A549 (cell line): ENCODE measurements at regions of chr5 and their contacts with region 1.

Region 1: GRCh38 chr5:141618804-141619554 is at the start of gene DIAPH1:
- DNase-seq: peak; percentile 85 to 97
- ATAC-seq: peak; percentile 95
- H3K4me3 ChIP-seq: peak within 1 kb of the TSS; percentile 99
- H3K27ac ChIP-seq: peak within 1 kb of the TSS; percentile 95 to 98
- H3K4me1 ChIP-seq: peaks cover 18% of the 10 kb centered on the region
- CTCF ChIP-seq: peak; percentile 97
- EP300 ChIP-seq: no peak; a peak in 1 of 5 replicates
- POLR2A ChIP-seq: peak; percentile 74
- RAD21 ChIP-seq: peak; percentile 76 to 92
- polyA plus RNA-seq, gene DIAPH1: 53.4 and 82.2 TPM in 2 replicates

Region 2: DNA sequence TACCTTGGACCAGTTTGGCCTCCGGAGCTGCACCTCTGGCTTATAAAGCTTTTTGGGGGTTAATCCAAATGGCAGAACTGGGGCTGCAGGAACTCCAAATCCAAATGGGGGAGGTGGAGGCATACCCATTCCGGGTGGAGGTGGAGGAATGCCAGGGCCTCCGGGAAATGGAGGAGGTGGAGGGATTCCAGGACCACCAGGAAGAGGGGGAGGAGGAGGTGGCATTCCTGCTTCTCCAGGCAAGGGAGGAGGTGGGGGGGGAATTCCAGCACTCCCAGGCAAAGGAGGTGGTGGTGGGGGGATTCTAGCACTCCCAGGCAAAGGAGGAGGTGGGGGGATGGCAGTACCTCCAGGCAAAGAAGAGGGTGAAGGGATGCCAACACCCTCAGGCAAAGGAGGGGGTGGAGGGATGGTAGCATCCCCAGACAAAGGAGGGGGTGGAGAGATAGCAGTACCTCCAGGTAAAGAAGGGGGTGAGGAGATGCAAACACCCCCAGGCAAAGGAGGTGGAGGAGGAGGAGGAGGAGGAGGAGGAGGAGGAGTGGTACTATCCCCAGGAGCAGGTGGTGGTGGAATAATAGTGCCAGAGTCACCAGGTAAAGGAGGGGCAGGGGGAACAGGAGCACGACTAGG is 45.4 kb before region 1 on chr5:
- CTCF ChIA-PET with region 1: interaction called, 17 read pairs
- POLR2A ChIA-PET with region 1: no interaction called
- DNase-seq: no peak
- ATAC-seq: no peak
- H3K4me3 ChIP-seq: no peak overlapping the region
- H3K27ac ChIP-seq: no peak overlapping the region
- H3K4me1 ChIP-seq: no peaks in the 10 kb centered on the region
- CTCF ChIP-seq: no peak
- EP300 ChIP-seq: no peak
- POLR2A ChIP-seq: no peak
- RAD21 ChIP-seq: no peak

Region 3: GRCh38 chr5:141590127-141590526 is 28.9 kb before region 1 on chr5:
- CTCF ChIA-PET with region 1: interaction called, 303 read pairs
- POLR2A ChIA-PET with region 1: interaction called, 20 read pairs
- DNase-seq: no peak
- ATAC-seq: no peak
- H3K4me3 ChIP-seq: no peak overlapping the region
- H3K27ac ChIP-seq: no peak overlapping the region
- H3K4me1 ChIP-seq: 0 out of 3 replicates have a peak, but pooled peaks cover 6% of the 10 kb centered on the region
- CTCF ChIP-seq: no peak
- EP300 ChIP-seq: no peak
- POLR2A ChIP-seq: no peak
- RAD21 ChIP-seq: no peak

Region 4: DNA sequence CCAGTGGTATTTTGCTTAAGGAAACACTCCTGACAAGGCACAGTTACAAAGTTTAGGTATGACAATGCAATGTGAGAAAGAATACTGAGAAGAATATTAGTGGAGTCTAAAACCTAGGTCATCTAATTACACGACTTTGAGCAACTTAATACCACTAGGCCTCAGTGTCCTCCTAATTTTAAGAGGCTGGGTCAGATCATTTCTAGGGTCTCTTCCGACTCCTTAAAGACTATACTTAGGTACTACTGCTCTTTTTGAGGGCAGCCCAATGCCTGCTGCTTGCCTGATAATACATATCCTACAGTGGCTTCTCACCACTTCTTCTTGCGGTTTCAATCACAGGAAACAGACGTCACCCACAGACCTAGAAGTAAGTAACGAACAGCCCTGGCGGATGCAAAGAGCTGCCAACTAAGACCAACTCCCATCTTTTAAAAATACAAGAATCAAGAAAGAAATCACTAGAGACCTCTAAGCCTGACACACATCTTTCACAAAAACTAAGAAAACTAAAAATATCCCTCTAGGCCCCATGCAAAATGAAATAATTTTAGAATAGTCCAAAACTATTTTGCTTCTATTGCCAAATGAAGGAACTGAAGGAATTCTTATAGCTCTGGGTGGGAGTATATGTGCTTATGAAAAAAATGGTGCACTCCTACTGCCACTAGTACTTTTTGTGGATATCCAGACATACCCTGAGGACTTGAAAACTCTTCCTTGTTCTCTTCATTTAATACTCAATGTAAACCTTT is 13.3 kb before region 1 on chr5:
- CTCF ChIA-PET with region 1: interaction called, 85 read pairs
- POLR2A ChIA-PET with region 1: interaction called, 4 read pairs
- DNase-seq: no peak
- ATAC-seq: no peak
- H3K4me3 ChIP-seq: no peak overlapping the region
- H3K27ac ChIP-seq: peak overlapping the region in 1 of 2 experiments; percentile 18; a peak in 2 of 6 replicates
- H3K4me1 ChIP-seq: peaks cover 50% of the 10 kb centered on the region
- CTCF ChIP-seq: no peak
- EP300 ChIP-seq: no peak
- POLR2A ChIP-seq: no peak
- RAD21 ChIP-seq: no peak

Region 5: DNA sequence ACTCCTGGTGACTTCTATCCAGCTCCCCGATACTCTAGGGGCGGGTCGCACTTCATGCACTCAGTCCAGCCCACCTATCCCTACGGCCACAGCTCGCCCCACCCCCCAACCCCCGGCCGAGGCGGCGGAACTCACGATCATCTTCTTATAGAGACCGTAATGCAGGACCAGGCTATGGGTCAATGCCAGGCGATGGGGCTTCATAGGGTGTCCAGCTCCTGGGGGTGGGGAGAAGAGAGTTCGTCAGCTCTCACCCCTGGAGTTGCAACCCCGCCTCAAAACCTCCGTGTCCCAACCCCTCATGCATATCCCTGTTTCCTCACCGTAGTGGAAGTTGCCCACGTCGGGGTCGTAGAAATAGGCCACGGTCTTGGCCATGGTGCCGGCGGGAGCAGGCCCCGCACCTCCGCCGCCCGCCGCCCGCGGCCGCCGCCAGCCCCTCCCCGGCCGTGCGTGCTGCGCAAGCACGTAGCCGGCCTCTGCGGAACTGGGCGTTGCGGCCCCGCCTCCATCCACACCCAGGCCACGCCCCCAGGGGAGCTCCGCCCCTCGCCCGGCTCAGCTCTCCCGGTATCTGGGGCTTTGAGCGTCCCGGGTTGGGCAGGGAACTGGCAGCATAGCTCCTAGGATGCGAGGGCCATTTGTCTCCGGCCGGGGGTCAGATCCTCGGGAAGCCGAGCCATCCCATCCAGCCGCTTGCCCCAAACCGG is 17.6 kb after region 1 on chr5 and contains the starts of genes HDAC3 and RELL2:
- CTCF ChIA-PET with region 1: interaction called, 170 read pairs
- POLR2A ChIA-PET with region 1: interaction called, 33 read pairs
- DNase-seq: peak; percentile 90 to 93
- ATAC-seq: peak; percentile 80 to 94
- H3K4me3 ChIP-seq: peak within 1 kb of the TSS; percentile 83
- H3K27ac ChIP-seq: peak within 1 kb of the TSS; percentile 85 to 92
- H3K4me1 ChIP-seq: peaks cover 18% of the 10 kb centered on the region
- CTCF ChIP-seq: no peak
- EP300 ChIP-seq: no peak
- POLR2A ChIP-seq: peak; percentile 94
- RAD21 ChIP-seq: no peak
- polyA plus RNA-seq, gene HDAC3: 67.3 and 80.0 TPM in 2 replicates
- polyA plus RNA-seq, gene RELL2: 2.8 and 3.6 TPM in 2 replicates

Region 6: GRCh38 chr5:141641634-141642267 is 22.8 kb after region 1 on chr5:
- CTCF ChIA-PET with region 1: interaction called, 170 read pairs
- POLR2A ChIA-PET with region 1: interaction called, 33 read pairs
- DNase-seq: peak; percentile 71 to 89
- ATAC-seq: peak; percentile 28 to 54; a peak in 3 of 6 replicates
- H3K4me3 ChIP-seq: no peak overlapping the region
- H3K27ac ChIP-seq: no peak overlapping the region
- H3K4me1 ChIP-seq: peaks cover 13% of the 10 kb centered on the region; the same call in 2 of the 3 replicates
- CTCF ChIP-seq: peak; percentile 32; the same call in 2 of the 3 replicates
- EP300 ChIP-seq: no peak
- POLR2A ChIP-seq: no peak
- RAD21 ChIP-seq: peak; percentile 11 to 15; a peak in 1 of 5 replicates

Region 7: DNA sequence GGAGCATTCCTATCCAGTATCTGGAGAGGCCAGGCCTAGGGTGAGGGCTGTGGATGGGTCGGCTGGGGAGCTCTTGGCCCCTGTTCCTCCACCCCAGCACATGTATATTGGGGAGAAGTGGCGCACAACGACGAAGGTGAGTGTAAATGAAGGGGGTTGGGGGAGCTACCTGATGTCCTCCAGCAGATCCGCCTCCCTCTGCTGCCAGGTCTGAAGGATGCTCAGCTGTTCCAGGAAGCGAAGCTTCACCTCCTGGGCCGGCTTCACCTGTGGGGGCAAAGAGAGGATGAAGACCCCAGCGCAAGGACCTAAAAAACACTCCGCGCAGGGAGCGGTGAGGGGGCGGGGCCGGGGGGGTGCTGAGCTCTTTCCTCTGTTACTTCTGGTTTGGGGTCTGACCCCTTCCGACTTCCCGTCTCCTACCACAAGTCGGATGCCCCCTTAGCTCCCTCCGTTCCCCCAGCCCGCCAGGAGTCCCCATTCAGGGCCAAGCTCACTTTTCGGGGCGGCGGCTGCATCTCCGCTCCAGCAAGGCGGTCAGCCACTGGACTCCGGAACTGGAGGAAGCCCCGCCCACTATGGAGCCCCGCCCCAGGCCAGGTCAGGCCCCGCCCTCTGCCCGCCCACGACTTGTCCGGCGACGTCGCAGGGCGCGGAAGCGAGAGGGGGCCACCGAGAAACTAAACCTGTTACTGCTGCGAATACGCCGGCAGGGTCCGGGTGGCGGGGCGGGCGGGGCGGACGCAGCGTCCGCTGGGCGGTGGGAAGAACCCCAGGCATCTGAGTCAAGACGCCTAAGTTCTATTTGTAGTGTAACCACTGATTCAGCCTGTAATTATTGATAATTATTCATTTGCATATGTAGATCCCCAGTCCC is 32.1 kb after region 1 on chr5 and contains the start of gene FCHSD1:
- CTCF ChIA-PET with region 1: interaction called, 18 read pairs
- POLR2A ChIA-PET with region 1: no interaction called
- DNase-seq: peak; percentile 82 to 98
- ATAC-seq: peak; percentile 81 to 96
- H3K4me3 ChIP-seq: peak within 1 kb of the TSS; percentile 70
- H3K27ac ChIP-seq: peak within 1 kb of the TSS; percentile 61 to 90
- H3K4me1 ChIP-seq: peaks cover 4% of the 10 kb centered on the region; the same call in 1 of the 3 replicates
- CTCF ChIP-seq: no peak
- EP300 ChIP-seq: no peak
- POLR2A ChIP-seq: peak; percentile 59
- RAD21 ChIP-seq: no peak
- polyA plus RNA-seq, gene FCHSD1: 11.0 and 12.2 TPM in 2 replicates

Region 8: GRCh38 chr5:141835928-141836670 is 217.1 kb after region 1 on chr5:
- CTCF ChIA-PET with region 1: no interaction called
- POLR2A ChIA-PET with region 1: no interaction called
- DNase-seq: no peak
- ATAC-seq: no peak
- H3K4me3 ChIP-seq: no peak overlapping the region
- H3K27ac ChIP-seq: no peak overlapping the region
- H3K4me1 ChIP-seq: peaks cover 4% of the 10 kb centered on the region; the same call in 1 of the 3 replicates
- CTCF ChIP-seq: no peak
- EP300 ChIP-seq: no peak
- POLR2A ChIP-seq: no peak
- RAD21 ChIP-seq: no peak